Activated CD4-positive, alpha-beta T cell treated with anti-CD3 and anti-CD28 coated beads for 36 hours (primary cell): ENCODE measurements at regions of chr2 and their contacts with region 1.

Region 1: DNA sequence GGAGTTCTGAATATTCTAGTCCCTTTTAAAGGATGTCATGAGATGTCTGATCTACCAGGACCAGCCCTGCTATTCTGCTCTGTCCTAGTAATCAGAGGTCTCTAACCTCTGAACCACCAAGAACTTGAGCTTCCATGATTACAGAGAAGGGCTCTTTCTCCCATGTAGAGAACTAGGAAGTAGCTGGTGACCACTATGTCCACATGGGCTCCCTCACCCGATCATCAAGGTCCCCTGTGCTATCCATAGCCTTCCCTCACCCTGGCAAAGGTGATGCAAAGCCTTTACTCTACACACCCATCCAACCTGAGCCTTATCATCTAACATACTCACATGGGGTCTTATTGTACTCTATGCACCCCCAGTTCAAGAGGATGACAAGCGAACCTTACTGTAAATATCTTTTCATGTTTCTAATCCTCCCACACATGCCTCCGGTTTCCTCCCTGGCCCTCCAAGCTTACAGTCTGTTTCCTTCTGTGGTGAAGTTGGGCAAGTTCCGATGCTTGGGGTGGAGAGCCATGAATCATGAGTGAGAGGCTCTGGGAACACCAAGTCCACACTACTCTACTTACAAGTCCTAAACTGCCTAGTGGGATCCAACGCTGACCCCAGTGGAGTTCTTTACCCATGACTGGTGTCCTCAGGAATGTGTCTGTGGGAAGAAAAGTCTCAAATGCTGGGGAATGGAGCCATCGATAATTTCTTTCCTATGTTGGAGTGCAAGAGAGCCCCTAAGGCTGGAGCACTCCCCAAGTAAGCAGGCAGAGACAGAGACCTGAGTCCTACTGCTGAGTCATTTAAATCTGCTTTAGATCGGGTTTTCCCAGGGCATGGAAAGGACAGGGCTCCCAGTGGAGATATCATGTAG is 73.3 kb upstream of the KLF7 start:
- DNase-seq: peak; percentile 70
- ATAC-seq: peak; percentile 28
- H3K4me3 Mint-ChIP-seq: no peak overlapping the region
- H3K27ac Mint-ChIP-seq: peak overlapping the region; percentile 80
- H3K4me1 Mint-ChIP-seq: peaks cover 19% of the 10 kb centered on the region
- H3K27me3 Mint-ChIP-seq: no peaks in the 10 kb centered on the region

Region 2: DNA sequence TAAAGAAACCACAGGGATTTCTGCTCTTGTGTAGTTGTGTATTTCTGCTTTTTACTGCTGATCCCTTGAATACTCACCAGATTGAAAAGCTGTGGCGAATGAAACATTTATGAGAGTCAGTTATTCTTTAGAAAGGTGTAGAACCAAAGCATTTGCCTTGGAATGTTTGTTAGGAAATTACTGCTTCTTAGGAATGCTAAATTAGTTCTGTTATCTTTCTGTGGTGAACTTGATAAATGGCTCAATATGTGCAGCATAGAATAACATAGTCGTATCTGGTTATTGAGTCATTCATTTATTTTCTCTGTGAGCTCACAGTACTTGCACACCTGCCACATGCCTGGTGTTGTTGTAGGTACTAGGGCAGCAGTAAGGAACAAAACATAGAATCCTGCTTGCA is 653.7 kb before region 1 on chr2:
- CTCF ChIA-PET with region 1: no interaction called
- POLR2A ChIA-PET with region 1: no interaction called
- intact Hi-C with region 1: no loop called
- DNase-seq: no peak
- ATAC-seq: no peak
- H3K4me3 Mint-ChIP-seq: no peak overlapping the region
- H3K27ac Mint-ChIP-seq: no peak overlapping the region
- H3K4me1 Mint-ChIP-seq: no peaks in the 10 kb centered on the region
- H3K27me3 Mint-ChIP-seq: no peaks in the 10 kb centered on the region

Region 3: GRCh38 chr2:207156451-207157161 is 82.5 kb before region 1 on chr2:
- CTCF ChIA-PET with region 1: no interaction called
- POLR2A ChIA-PET with region 1: interaction called, 11 read pairs
- intact Hi-C with region 1: loop called in 1 of 2 experiments (anchors 5 kb)
- DNase-seq: peak; percentile 65
- ATAC-seq: peak; percentile 83
- H3K4me3 Mint-ChIP-seq: no peak overlapping the region
- H3K27ac Mint-ChIP-seq: peak overlapping the region; percentile 8
- H3K4me1 Mint-ChIP-seq: peaks cover 79% of the 10 kb centered on the region
- H3K27me3 Mint-ChIP-seq: no peaks in the 10 kb centered on the region

Region 4: DNA sequence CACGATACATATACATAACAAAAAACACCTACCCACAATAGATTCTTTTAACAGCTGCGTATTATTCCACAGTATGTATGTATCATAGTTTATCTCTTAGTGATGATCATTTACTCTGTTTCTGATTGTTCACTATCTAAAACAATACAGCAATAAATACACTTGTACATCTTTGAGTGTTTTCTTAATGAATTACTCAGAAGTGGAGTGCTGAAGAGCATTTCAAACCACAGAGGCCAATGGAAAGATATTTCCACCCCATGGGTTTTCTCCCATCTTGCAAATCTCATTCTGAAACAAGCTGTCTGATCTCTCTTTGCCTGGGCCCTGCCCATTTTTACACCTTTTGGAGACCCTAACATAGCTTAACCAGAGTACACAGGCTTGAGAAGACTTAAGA is 40.5 kb after region 1 on chr2:
- CTCF ChIA-PET with region 1: interaction called, 3 read pairs
- POLR2A ChIA-PET with region 1: no interaction called
- intact Hi-C with region 1: loop called in 1 of 2 experiments (anchors 2 kb)
- DNase-seq: peak; percentile 32
- ATAC-seq: peak; percentile 87
- H3K4me3 Mint-ChIP-seq: no peak overlapping the region
- H3K27ac Mint-ChIP-seq: peak overlapping the region; percentile 63
- H3K4me1 Mint-ChIP-seq: peaks cover 42% of the 10 kb centered on the region
- H3K27me3 Mint-ChIP-seq: no peaks in the 10 kb centered on the region

Region 5: GRCh38 chr2:207288628-207289027 is 49.6 kb after region 1 on chr2:
- CTCF ChIA-PET with region 1: interaction called, 3 read pairs
- POLR2A ChIA-PET with region 1: no interaction called
- intact Hi-C with region 1: loop called in 1 of 2 experiments (anchors 1 kb)
- DNase-seq: peak; percentile 63
- ATAC-seq: peak; percentile 40
- H3K4me3 Mint-ChIP-seq: no peak overlapping the region
- H3K27ac Mint-ChIP-seq: no peak overlapping the region
- H3K4me1 Mint-ChIP-seq: peaks cover 75% of the 10 kb centered on the region
- H3K27me3 Mint-ChIP-seq: peaks cover 2% of the 10 kb centered on the region

Region 6: DNA sequence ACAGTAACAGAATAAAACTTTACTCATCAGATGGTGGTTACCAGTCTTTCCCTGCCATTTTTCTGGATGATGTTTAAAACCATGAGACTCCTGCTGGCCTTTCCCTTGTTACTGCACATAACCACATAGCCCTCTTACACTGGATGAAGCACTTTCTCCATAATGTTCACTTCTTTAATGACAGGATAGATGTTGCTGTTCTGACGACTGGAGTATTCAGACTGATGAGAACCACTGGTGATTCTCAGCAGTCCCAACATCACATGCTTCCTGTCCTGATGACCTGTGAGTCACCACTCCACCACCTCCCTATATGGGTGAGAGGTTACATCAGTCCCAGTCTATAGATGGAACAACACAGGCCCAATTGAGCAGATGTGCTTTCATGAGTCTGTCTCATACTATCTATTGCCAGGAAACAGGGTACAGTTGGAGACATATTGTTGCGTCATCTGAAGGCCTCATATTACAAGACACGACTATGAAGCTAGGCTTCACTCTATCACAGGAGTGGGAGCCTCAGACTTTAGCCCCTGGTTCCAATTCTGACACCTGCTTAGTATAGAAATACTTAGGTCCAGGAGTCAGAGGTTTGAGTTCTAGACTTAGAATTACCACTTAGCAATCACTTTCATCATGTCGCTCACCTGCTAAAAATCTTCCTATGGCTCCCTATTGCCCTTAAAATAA is 72.4 kb after region 1 on chr2:
- CTCF ChIA-PET with region 1: no interaction called
- POLR2A ChIA-PET with region 1: no interaction called
- intact Hi-C with region 1: loop called (anchors 2 kb)
- DNase-seq: peak; percentile 74
- ATAC-seq: peak; percentile 97
- H3K4me3 Mint-ChIP-seq: peak overlapping the region; percentile 13
- H3K27ac Mint-ChIP-seq: peak overlapping the region; percentile 96
- H3K4me1 Mint-ChIP-seq: peaks cover 32% of the 10 kb centered on the region
- H3K27me3 Mint-ChIP-seq: no peaks in the 10 kb centered on the region

Region 7: GRCh38 chr2:207317378-207317984 is 78.4 kb after region 1 on chr2:
- CTCF ChIA-PET with region 1: no interaction called
- POLR2A ChIA-PET with region 1: no interaction called
- intact Hi-C with region 1: loop called in 1 of 2 experiments (anchors 2 kb)
- DNase-seq: no peak
- ATAC-seq: peak; percentile 79
- H3K4me3 Mint-ChIP-seq: no peak overlapping the region
- H3K27ac Mint-ChIP-seq: peak overlapping the region; percentile 58
- H3K4me1 Mint-ChIP-seq: peaks cover 24% of the 10 kb centered on the region
- H3K27me3 Mint-ChIP-seq: peaks cover 4% of the 10 kb centered on the region

Region 8: GRCh38 chr2:207394812-207395534 is 155.9 kb after region 1 on chr2:
- CTCF ChIA-PET with region 1: no interaction called
- POLR2A ChIA-PET with region 1: no interaction called
- intact Hi-C with region 1: loop called in 1 of 2 experiments (anchors 1 kb)
- DNase-seq: peak; percentile 81
- ATAC-seq: peak; percentile 98
- H3K4me3 Mint-ChIP-seq: no peak overlapping the region
- H3K27ac Mint-ChIP-seq: peak overlapping the region; percentile 77
- H3K4me1 Mint-ChIP-seq: peaks cover 14% of the 10 kb centered on the region
- H3K27me3 Mint-ChIP-seq: no peaks in the 10 kb centered on the region